ENCODE measurements at regions of chr1 and their contacts with region 1.

Region 1: DNA sequence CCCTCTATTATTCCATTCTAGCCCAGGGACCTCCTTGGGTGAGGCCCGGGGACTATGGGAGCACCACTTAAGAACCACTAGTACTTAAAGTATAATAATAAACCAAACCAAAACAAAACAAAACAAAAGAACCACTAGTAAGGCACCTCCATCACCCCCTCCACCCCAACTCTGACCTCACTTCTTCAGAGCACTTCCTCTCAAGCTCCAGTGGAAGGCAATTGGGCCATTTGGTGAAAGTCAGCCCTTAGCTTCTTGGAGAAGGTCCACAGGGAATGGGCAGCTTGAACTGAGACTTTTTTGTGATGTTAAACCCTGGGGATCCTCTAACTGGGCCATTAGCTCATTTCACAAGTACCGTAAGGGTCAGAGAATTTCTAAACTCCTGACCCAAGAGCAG is 237.3 kb downstream of the RHOU start:
- DNase-seq: peak in 1 of 2 donors; percentile 32
- H3K4me3 ChIP-seq: no peak overlapping the region
- CTCF ChIP-seq: no peak
- POLR2A ChIP-seq: no peak

Region 2: DNA sequence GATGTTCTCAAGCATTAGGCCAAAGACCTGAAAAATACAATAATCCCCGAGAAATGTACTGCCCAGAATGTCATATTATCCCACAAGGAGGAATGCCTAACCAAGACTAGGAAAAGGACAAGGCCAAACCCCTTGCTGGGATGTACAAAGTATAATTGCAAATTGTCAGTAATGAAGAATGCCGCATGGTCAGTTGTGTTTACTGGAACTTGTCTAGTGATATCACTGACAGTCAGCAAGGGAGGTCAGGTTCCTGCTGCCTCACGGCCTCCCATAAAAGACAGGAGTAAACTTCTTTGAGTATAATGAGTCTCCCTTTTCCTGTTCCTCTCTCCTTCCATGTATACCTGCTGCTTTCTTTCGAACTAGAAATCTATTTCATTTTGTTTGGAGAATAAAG is 14.5 kb before region 1 on chr1:
- intact Hi-C with region 1: loop called (anchors 2 kb)
- DNase-seq: peak in 1 of 2 donors; percentile 1
- H3K4me3 ChIP-seq: no peak overlapping the region
- CTCF ChIP-seq: no peak
- POLR2A ChIP-seq: no peak

Region 3: DNA sequence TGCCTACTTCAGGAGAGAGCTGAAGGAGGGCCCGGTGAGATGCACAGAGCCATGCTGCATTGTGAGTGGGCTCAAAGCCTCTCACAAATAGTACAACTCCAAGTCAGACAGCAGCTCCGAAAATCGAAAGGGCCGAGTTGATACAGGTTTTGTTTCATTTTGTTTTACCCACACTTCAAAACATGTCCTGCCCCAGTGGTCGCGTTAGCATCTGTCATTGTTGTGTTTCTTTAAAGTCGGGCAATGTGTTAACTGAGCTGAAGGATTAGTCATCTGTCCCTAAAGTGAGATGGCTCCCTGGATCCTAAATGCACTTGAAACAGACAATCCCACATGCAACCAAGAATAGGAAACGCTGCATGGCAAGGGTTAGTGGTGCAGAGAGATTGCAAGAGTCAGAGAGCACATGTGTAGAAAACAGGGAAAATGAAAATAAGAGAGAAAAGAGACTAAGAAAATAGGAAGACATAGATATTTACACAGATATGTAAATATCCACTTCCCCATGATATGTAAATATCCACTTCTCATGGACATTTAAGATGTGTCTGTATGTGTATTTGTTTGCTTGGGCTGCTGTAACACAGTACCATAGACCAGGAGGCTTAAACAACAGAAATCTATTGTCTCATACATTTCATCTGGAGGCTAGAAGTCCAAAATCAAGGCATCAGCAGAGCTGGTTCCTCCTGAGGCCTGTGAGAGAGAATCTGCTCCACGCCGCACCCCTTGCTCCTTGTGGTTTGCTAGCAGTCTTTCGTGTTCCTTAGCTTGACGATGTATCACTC is 166.9 kb after region 1 on chr1:
- intact Hi-C with region 1: no loop called
- DNase-seq: no peak
- H3K4me3 ChIP-seq: no peak overlapping the region
- CTCF ChIP-seq: no peak
- POLR2A ChIP-seq: no peak